HCT116 (cell line): ENCODE measurements at regions of chr3 and their contacts with region 1.

Region 1: GRCh38 chr3:151838583-151839312 is 24.8 kb downstream of the AADAC start:
- DNase-seq: peak; percentile 75
- ATAC-seq: peak; percentile 80
- H3K4me3 ChIP-seq: peak overlapping the region; percentile 12 to 21; a peak in 2 of 4 replicates
- H3K27ac ChIP-seq: no peak overlapping the region
- H3K4me1 ChIP-seq: peaks cover 22 to 30% of the 10 kb centered on the region in 2 experiments
- H3K27me3 ChIP-seq: no peaks in the 10 kb centered on the region
- CTCF ChIP-seq: peak; percentile 73 to 81 (median 75)
- POLR2A ChIP-seq: no peak
- RAD21 ChIP-seq: peak; percentile 94

Region 2: DNA sequence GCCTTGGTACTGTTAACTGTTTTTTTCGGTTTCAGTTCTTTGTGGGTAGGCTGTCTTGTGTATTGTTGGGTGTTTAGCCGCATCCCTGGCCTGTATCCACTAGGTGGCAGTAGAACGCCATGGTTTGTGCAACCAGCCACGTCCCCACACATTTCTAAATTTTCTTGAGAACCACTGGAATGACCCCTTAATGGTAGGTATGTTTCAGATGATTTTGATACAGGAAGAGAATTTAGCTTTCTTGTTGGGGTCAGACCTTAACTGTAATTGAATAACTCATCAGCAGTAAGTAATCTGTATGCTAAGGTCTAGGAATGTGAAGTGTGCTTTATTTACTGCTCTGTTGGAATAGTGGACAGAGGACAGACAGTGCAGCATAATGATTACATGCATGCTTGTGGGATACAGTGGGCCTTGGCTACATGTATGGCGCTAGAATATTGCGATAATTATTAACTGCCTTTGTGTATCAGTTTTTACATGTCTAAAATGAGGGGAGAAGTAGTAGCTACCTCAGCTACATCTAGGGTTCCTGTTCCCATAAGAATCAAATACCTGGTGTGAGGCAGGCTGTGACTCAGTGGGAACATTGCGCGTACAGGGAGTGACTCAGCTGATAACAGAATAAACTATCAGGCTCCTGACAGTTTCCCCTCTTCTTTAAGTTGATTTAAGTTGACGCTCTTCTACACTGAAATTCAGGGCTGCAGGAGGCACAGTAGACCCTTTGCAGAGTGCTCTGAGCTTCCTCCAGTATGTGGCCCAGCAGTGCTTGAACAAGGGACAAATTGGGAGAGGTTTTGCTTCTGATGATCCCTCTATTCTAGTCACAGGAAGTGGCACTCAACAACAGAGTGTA is 610.7 kb before region 1 on chr3:
- CTCF ChIA-PET with region 1: interaction called, 6 read pairs
- POLR2A ChIA-PET with region 1: no interaction called
- RAD21 ChIA-PET with region 1: no interaction called
- intact Hi-C with region 1: loop called (anchors 1 kb)
- DNase-seq: peak; percentile 54
- ATAC-seq: peak; percentile 94
- H3K4me3 ChIP-seq: no peak overlapping the region
- H3K27ac ChIP-seq: no peak overlapping the region
- H3K4me1 ChIP-seq: peaks cover 0 to 16% of the 10 kb centered on the region in 2 experiments; a peak in 2 of 4 replicates
- H3K27me3 ChIP-seq: no peaks in the 10 kb centered on the region
- CTCF ChIP-seq: peak; percentile 83 to 98 (median 86)
- POLR2A ChIP-seq: no peak
- RAD21 ChIP-seq: peak; percentile 94

Region 3: DNA sequence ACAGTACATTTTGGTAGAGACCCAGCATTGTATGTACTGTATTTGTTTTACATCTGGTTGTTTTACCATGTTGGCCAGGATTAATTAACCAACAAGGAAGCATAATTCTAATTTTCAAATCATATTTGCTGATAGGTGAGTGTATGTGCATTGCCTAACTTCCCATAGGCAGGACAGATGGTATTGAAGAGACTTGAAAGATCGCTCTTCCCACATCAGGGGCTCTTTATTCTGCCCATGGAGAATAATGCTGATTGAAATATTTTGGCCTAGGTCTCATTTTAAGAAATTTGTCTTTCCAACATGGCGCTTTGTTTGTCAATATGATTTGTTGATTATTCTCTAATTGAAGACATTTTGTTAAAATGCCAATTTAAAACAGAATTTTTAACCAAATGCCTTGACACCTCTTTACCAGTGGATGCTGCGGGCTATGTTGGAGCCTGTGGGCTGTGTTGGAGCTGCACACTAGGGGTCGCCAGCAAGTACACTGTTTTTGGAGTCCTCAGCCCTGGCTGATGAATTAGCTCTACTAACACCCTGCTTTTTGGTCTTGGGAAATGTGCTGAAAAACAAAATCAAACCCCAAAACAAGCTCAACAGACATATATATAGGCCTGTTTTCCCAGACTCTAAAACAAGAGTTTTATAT is 459.5 kb before region 1 on chr3:
- CTCF ChIA-PET with region 1: interaction called, 7 read pairs
- POLR2A ChIA-PET with region 1: no interaction called
- RAD21 ChIA-PET with region 1: no interaction called
- intact Hi-C with region 1: loop called (anchors 5 kb)
- DNase-seq: peak; percentile 10
- ATAC-seq: peak; percentile 98
- H3K4me3 ChIP-seq: no peak overlapping the region
- H3K27ac ChIP-seq: no peak overlapping the region
- H3K4me1 ChIP-seq: no peaks in the 10 kb centered on the region
- H3K27me3 ChIP-seq: no peaks in the 10 kb centered on the region
- CTCF ChIP-seq: peak; percentile 22 to 83 (median 78); a peak in 4 of 6 replicates
- POLR2A ChIP-seq: no peak
- RAD21 ChIP-seq: peak; percentile 33; the same call in 1 of the 2 replicates

Region 4: GRCh38 chr3:151439652-151440129 is 399.1 kb before region 1 on chr3:
- CTCF ChIA-PET with region 1: interaction called, 106 read pairs
- POLR2A ChIA-PET with region 1: interaction called, 9 read pairs
- RAD21 ChIA-PET with region 1: interaction called, 7 to 9 read pairs
- intact Hi-C with region 1: loop called (anchors 1 kb)
- DNase-seq: peak; percentile 53
- ATAC-seq: peak; percentile 94
- H3K4me3 ChIP-seq: no peak overlapping the region
- H3K27ac ChIP-seq: no peak overlapping the region
- H3K4me1 ChIP-seq: no peaks in the 10 kb centered on the region
- H3K27me3 ChIP-seq: no peaks in the 10 kb centered on the region
- CTCF ChIP-seq: peak; percentile 77 to 90 (median 88)
- POLR2A ChIP-seq: no peak
- RAD21 ChIP-seq: peak; percentile 88

Region 5: GRCh38 chr3:151918253-151919029 is 79.7 kb after region 1 on chr3:
- CTCF ChIA-PET with region 1: interaction called, 7 read pairs
- POLR2A ChIA-PET with region 1: no interaction called
- RAD21 ChIA-PET with region 1: no interaction called
- intact Hi-C with region 1: loop called (anchors 1 kb)
- DNase-seq: peak; percentile 50
- ATAC-seq: peak; percentile 74
- H3K4me3 ChIP-seq: no peak overlapping the region
- H3K27ac ChIP-seq: no peak overlapping the region
- H3K4me1 ChIP-seq: 0 out of 4 replicates have a peak, but pooled peaks cover 0 to under 1% of the 10 kb centered on the region in 2 experiments
- H3K27me3 ChIP-seq: no peaks in the 10 kb centered on the region
- CTCF ChIP-seq: peak; percentile 50 to 71 (median 71)
- POLR2A ChIP-seq: no peak
- RAD21 ChIP-seq: peak; percentile 83